Activated T-helper 1 cell treated with anti-CD3 and anti-CD28 coated beads, Interleukin-12 subunit alpha, Interleukin-12 subunit beta, Interleukin-2, Interleukin-4 antibody, amounts not matched to agents 30 ng/mL and 10 ng/mL and 1 ng/mL, durations not matched to agents 14 hours and 24 hours and 36 hours (primary cell): ENCODE measurements at regions of chr10 and their contacts with region 1.

Region 1: GRCh38 chr10:27155066-27155754 is at the start of gene MASTL:
- DNase-seq: peak; percentile 93
- H3K4me3 Mint-ChIP-seq: peak within 1 kb of the TSS; percentile 99
- H3K27ac Mint-ChIP-seq: peak within 1 kb of the TSS; percentile 99
- H3K4me1 Mint-ChIP-seq: peaks cover 42% of the 10 kb centered on the region
- H3K27me3 Mint-ChIP-seq: no peaks in the 10 kb centered on the region
- total RNA-seq, gene MASTL: 33.2 and 33.7 TPM in 2 replicates

Region 2: GRCh38 chr10:26437637-26438461 is 717.4 kb before region 1 on chr10 and contains the start of gene APBB1IP:
- intact Hi-C with region 1: loop called (anchors 5 kb)
- DNase-seq: peak; percentile 40
- H3K4me3 Mint-ChIP-seq: peak within 1 kb of the TSS; percentile 95
- H3K27ac Mint-ChIP-seq: peak within 1 kb of the TSS; percentile 93
- H3K4me1 Mint-ChIP-seq: peaks cover 51% of the 10 kb centered on the region
- H3K27me3 Mint-ChIP-seq: no peaks in the 10 kb centered on the region
- total RNA-seq, gene APBB1IP: 39.6 and 43.6 TPM in 2 replicates

Region 3: GRCh38 chr10:26737730-26738129 is 417.5 kb before region 1 on chr10:
- intact Hi-C with region 1: loop called (anchors 2 kb)
- DNase-seq: peak; percentile 59
- H3K4me3 Mint-ChIP-seq: peak overlapping the region; percentile 45
- H3K27ac Mint-ChIP-seq: peak overlapping the region; percentile 99
- H3K4me1 Mint-ChIP-seq: peaks cover 74% of the 10 kb centered on the region
- H3K27me3 Mint-ChIP-seq: no peaks in the 10 kb centered on the region

Region 4: DNA sequence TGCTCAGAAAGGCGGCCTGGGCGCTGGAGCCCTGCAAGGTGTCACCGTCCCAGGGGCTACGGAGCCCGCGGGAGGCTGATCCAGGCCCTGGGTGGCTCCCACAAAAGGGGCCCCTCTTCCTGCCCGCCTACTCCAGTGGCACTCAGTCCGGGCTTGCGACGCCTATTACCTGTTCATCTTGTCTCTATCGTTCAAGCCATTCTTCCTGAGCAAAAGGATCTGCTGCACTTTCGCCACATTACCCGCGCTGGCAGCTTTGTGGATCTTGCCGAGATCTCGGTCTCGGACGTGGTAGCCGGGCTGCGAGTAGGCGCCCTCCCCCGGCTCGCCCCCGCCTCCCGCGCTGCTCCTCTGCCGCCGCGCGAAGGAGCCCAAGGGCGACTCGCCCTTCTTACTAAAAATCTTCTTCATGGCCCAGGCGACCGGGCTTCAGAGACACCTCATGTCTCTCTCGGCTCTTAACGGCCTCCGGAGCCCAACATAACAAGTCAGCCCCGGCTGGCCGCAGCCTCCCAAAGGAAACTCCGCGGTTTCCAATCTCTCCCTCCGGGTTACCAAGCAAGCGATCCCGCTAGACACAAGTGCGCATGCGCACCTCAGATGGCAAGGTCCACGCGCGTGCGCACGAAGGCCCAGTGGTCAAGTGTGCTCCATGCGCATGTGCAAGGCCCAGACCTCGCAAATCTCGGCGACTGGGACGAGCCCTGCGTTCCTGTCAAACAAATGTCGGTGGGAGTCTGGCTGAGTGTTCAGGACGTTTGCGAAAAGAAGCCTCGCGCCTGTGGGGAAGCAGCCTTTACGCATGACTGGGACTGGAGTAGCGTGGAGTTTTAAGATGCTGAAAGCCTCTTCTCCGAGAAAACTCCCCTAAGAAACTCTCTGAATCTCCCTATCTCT is 55.0 kb before region 1 on chr10 and contains the start of gene ANKRD26:
- intact Hi-C with region 1: loop called (anchors 1 kb)
- DNase-seq: peak; percentile 96
- H3K4me3 Mint-ChIP-seq: peak within 1 kb of the TSS; percentile 86
- H3K27ac Mint-ChIP-seq: peak within 1 kb of the TSS; percentile 98
- H3K4me1 Mint-ChIP-seq: peaks cover 43% of the 10 kb centered on the region
- H3K27me3 Mint-ChIP-seq: no peaks in the 10 kb centered on the region
- total RNA-seq, gene ANKRD26: 4.3 and 7.0 TPM in 2 replicates

Region 5: GRCh38 chr10:27197980-27198620 is 42.9 kb after region 1 on chr10:
- intact Hi-C with region 1: no loop called
- DNase-seq: no peak
- H3K4me3 Mint-ChIP-seq: no peak overlapping the region
- H3K27ac Mint-ChIP-seq: no peak overlapping the region
- H3K4me1 Mint-ChIP-seq: no peaks in the 10 kb centered on the region
- H3K27me3 Mint-ChIP-seq: no peaks in the 10 kb centered on the region

Region 6: GRCh38 chr10:27241652-27242472 is 86.7 kb after region 1 on chr10:
- intact Hi-C with region 1: loop called (anchors 1 kb)
- DNase-seq: peak; percentile 87
- H3K4me3 Mint-ChIP-seq: peak overlapping the region; percentile 89
- H3K27ac Mint-ChIP-seq: peak overlapping the region; percentile 93
- H3K4me1 Mint-ChIP-seq: peaks cover 29% of the 10 kb centered on the region
- H3K27me3 Mint-ChIP-seq: no peaks in the 10 kb centered on the region

Region 7: DNA sequence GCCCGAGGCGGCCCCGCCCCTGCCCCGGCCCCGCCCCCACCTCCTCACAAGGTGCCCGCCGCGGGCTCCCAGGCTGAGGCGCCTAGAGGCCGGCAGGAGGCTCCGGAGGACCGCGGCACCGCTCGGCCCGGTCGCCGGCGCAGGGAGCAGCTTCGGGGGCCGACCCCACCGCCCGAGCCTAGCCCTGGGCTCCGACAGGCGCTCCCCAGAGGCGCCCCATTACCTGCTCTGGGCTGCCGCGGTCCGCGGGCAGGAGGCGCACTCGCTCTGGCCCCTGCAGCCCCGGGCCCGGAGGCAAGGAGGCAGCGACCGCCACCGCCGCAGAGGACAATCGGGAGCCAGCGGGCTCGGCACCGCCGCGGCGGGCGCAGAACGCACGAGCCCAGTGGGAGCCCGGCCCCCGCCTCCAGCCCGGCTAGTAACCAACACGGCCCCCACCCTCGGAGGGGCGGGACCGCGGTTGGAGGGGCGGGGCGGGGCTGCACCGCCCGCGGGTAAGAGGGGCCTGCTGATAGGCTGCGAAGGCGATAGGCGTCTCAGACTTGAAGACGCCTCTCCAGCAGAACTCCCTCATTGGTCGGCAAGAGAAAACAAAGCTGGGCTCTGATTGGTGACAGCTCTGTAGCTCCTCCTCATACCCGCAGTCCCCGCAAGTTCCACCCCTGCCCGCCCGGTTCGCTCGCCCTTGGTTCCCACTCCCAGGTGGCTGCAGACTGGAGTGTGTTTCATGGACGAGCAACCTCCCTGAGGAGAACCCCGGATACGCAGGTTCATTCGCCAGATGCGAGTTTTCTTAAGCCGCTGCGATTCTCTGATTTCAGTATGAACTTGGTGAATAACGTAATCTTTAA is 1147.7 kb after region 1 on chr10 and contains the start of gene MPP7:
- intact Hi-C with region 1: loop called (anchors 1 kb)
- DNase-seq: peak; percentile 93
- H3K4me3 Mint-ChIP-seq: peak within 1 kb of the TSS; percentile 85
- H3K27ac Mint-ChIP-seq: peak within 1 kb of the TSS; percentile 41
- H3K4me1 Mint-ChIP-seq: peaks cover 32% of the 10 kb centered on the region
- H3K27me3 Mint-ChIP-seq: peaks cover 34% of the 10 kb centered on the region
- total RNA-seq, gene MPP7: 0.15 and 0.29 TPM in 2 replicates

Region 8: GRCh38 chr10:28730031-28730778 is 1575.0 kb after region 1 on chr10:
- intact Hi-C with region 1: no loop called
- DNase-seq: no peak
- H3K4me3 Mint-ChIP-seq: no peak overlapping the region
- H3K27ac Mint-ChIP-seq: no peak overlapping the region
- H3K4me1 Mint-ChIP-seq: no peaks in the 10 kb centered on the region
- H3K27me3 Mint-ChIP-seq: peaks cover 5% of the 10 kb centered on the region